Left cardiac atrium (tissue), 4 donors: ENCODE measurements at regions of chr2 and their contacts with region 1.

Region 1: GRCh38 chr2:12733846-12734245 is 17.1 kb downstream of the TRIB2 start:
- DNase-seq: peak; percentile 57
- ATAC-seq: peak; percentile 13 to 36

Region 2: DNA sequence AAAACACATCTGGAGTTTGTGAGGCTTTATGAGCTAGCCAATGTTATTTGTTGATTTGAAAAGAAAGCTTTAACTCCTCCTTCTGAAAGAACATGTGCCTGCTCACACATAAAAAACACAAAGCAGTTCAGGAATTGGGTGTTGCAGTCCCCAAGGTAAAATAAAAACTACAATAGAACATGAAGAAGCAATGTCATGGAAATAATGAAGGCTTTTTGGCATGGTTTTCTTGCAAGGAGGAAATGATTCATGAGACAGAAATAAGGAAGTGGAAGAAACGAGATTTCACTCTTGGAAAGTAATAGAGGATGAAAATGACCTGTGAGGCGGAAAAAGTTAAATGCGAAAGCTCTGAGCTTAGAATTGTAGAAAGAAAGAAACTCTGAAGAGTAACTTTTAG is 64.0 kb after region 1 on chr2:
- intact Hi-C with region 1: loop called in 1 of 2 experiments (anchors 5 kb)
- DNase-seq: no peak
- ATAC-seq: peak; percentile 27 to 55

Region 3: GRCh38 chr2:12824351-12824777 is 90.5 kb after region 1 on chr2:
- intact Hi-C with region 1: loop called in 1 of 2 experiments (anchors 5 kb)
- DNase-seq: peak; percentile 47
- ATAC-seq: peak; percentile 74 to 77